T-cell (primary cell): ENCODE measurements at regions of chr20 and their contacts with region 1.

Region 1: DNA sequence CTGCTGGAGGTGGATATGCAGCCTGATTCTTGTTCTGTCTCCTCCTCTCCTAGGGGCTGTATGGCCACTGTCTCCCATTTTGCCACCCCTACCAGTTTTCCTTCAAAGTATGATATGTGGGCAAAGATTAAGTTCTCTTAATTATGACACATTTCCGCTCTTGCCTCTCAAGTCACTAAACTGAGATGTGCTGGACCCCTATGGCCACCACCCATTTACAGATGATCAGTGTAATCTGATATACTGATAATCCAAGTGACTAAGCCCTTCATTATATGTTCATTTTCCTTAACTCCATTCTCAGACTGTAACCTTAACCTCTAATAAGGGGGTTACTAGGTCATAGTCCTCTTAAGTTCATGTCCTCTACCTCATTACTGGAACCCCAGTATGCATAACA is 711 bp upstream of the C20orf141 start:
- DNase-seq: no peak
- ATAC-seq: no peak
- H3K4me3 ChIP-seq: no peak overlapping the region
- H3K4me3 Mint-ChIP-seq: no peak overlapping the region
- H3K27ac ChIP-seq: no peak overlapping the region
- H3K27ac Mint-ChIP-seq: no peak overlapping the region
- H3K4me1 ChIP-seq: peaks cover 0 to 7% of the 10 kb centered on the region in 2 experiments
- H3K4me1 Mint-ChIP-seq: no peaks in the 10 kb centered on the region
- H3K27me3 ChIP-seq: peaks cover 4 to 30% of the 10 kb centered on the region in 2 experiments
- H3K27me3 Mint-ChIP-seq: peaks cover 24 to 38% of the 10 kb centered on the region in 2 donors

Region 2: DNA sequence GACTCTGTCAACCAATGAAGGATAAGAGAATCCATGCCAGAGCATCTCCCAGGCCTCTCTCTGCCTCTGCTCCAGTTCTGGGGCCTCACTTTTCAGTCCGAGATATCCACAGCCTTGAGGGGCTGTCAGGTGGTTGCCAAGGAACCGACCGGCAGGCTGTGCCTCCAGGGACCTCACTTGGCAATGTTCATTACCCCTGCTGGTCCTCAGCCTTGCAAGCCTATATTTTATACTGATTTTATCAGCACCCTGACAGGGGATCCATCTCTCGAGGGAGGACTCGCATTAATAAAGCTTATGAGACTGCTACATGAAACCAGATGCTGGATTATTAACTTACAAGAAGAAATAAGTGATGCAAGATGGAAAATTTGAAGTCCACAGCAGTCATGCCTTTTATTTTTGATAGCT is 237.8 kb before region 1 on chr20:
- CTCF ChIA-PET with region 1: no interaction called
- POLR2A ChIA-PET with region 1: no interaction called
- DNase-seq: no peak
- ATAC-seq: no peak
- H3K4me3 ChIP-seq: no peak overlapping the region
- H3K4me3 Mint-ChIP-seq: no peak overlapping the region
- H3K27ac ChIP-seq: no peak overlapping the region
- H3K27ac Mint-ChIP-seq: no peak overlapping the region
- H3K4me1 ChIP-seq: no peaks in the 10 kb centered on the region
- H3K4me1 Mint-ChIP-seq: no peaks in the 10 kb centered on the region
- H3K27me3 ChIP-seq: peaks cover 4 to 34% of the 10 kb centered on the region in 2 experiments
- H3K27me3 Mint-ChIP-seq: peaks cover 31 to 59% of the 10 kb centered on the region in 2 donors

Region 3: GRCh38 chr20:2795451-2795850 is 18.6 kb before region 1 on chr20:
- CTCF ChIA-PET with region 1: interaction called in 1 of 2 experiments, 15 read pairs
- POLR2A ChIA-PET with region 1: no interaction called
- DNase-seq: no peak
- ATAC-seq: no peak
- H3K4me3 ChIP-seq: no peak overlapping the region
- H3K4me3 Mint-ChIP-seq: no peak overlapping the region
- H3K27ac ChIP-seq: no peak overlapping the region
- H3K27ac Mint-ChIP-seq: no peak overlapping the region
- H3K4me1 ChIP-seq: peaks cover 0 to 17% of the 10 kb centered on the region in 2 experiments
- H3K4me1 Mint-ChIP-seq: peaks cover 15 to 16% (median 15%) of the 10 kb centered on the region in 3 donors
- H3K27me3 ChIP-seq: peaks cover 0 to 72% of the 10 kb centered on the region in 2 experiments
- H3K27me3 Mint-ChIP-seq: peaks cover 46 to 58% of the 10 kb centered on the region in 2 donors